ENCODE measurements at regions of chr3 and their contacts with region 1.

Region 1: GRCh38 chr3:73848173-73848906 is 223.6 kb upstream of the PDZRN3 start:
- DNase-seq: no peak
- H3K4me3 Mint-ChIP-seq: no peak overlapping the region
- H3K27ac Mint-ChIP-seq: no peak overlapping the region
- H3K4me1 Mint-ChIP-seq: no peaks in the 10 kb centered on the region
- H3K27me3 Mint-ChIP-seq: no peaks in the 10 kb centered on the region

Region 2: GRCh38 chr3:73508330-73508954 is 339.9 kb before region 1 on chr3:
- CTCF ChIA-PET with region 1: no interaction called
- intact Hi-C with region 1: loop called (anchors 1 kb)
- DNase-seq: peak; percentile 50
- H3K4me3 Mint-ChIP-seq: no peak overlapping the region
- H3K27ac Mint-ChIP-seq: no peak overlapping the region
- H3K4me1 Mint-ChIP-seq: no peaks in the 10 kb centered on the region
- H3K27me3 Mint-ChIP-seq: no peaks in the 10 kb centered on the region

Region 3: DNA sequence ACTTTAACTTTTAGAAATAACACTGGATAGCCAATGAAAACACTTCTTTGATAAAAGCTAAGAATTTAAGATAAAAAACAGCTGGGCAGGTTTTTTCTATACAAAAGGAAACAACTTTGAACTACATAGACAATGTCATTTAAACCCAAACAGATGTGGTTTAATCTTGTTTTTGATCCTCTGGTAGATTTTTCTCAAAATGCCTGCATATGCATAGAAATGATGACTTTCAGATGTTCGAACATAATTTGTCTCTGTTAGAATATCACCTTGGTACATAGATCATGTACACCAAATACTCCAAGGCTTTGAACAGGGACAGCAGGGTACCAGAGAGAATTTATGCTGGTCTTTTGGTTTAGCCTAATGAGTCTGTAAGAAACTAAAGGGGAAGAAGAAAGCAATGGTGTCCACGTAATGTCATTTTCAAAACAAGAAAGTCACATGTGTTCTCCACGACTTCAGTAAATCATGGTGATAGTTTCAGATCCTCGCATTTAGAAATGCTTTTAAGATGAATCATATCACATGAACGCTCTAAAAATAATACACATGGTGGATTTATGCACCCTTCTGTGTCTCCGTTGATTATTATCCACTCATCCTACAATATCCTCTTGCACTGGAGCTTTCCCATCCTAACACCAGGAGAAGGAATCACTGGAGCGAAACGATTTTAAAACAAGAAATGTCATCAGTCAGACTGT is 63.5 kb before region 1 on chr3:
- CTCF ChIA-PET with region 1: no interaction called
- intact Hi-C with region 1: no loop called
- DNase-seq: no peak
- H3K4me3 Mint-ChIP-seq: no peak overlapping the region
- H3K27ac Mint-ChIP-seq: no peak overlapping the region
- H3K4me1 Mint-ChIP-seq: no peaks in the 10 kb centered on the region
- H3K27me3 Mint-ChIP-seq: no peaks in the 10 kb centered on the region

Region 4: GRCh38 chr3:73813310-73814292 is 34.7 kb before region 1 on chr3:
- CTCF ChIA-PET with region 1: no interaction called
- intact Hi-C with region 1: no loop called
- DNase-seq: no peak
- H3K4me3 Mint-ChIP-seq: no peak overlapping the region
- H3K27ac Mint-ChIP-seq: no peak overlapping the region
- H3K4me1 Mint-ChIP-seq: no peaks in the 10 kb centered on the region
- H3K27me3 Mint-ChIP-seq: no peaks in the 10 kb centered on the region